Heart right ventricle (tissue), 16 donors: ENCODE measurements at regions of chr3 and their contacts with region 1.

Region 1: DNA sequence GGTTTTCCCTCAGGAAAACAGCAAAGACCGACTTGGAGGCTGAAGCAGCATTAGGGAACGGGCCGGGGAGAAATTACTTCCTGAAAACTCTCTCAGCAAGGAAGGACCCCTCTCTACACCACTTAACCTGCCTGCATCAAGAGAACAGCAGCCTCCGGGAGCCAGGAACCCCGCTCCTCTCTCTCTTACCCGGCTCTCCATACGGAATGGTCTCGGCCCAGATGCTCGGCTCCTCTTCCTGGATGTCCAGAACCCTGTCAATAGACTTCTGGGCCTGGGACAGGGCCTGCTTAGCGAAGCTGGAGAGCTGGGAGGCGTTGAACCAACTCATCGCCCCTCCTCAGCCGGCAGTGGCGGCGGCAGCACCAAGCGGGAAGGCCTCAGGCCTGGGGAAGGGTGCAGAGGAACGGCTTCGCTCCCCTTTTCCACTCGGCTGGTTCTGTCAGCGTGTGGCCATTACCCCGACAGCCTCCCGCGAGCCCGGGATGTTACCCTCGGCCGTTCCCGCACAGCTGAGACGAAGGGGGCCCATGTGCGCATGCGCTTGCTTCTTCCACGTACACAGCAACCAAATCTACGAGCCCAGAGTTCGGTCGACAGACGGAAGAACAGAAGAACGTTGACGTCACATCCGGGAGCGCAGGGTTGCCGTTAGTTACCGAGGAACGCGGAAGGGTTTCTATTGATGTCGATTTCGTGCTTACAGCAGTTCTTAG is at the start of gene TMF1:
- DNase-seq: peak; percentile 98
- ATAC-seq: peak; percentile 96 to 99 (median 98)
- H3K4me3 ChIP-seq: peak within 1 kb of the TSS; percentile 66 to 99 (median 76)
- H3K27ac ChIP-seq: peak within 1 kb of the TSS; percentile 82 to 98 (median 92)
- H3K4me1 ChIP-seq: peaks cover 3 to 42% (median 36%) of the 10 kb centered on the region in 9 donors
- H3K27me3 ChIP-seq: no peaks in the 10 kb centered on the region
- CTCF ChIP-seq: no peak
- total RNA-seq, gene TMF1: 14.8 to 23.2 (median 21.1) TPM

Region 2: DNA sequence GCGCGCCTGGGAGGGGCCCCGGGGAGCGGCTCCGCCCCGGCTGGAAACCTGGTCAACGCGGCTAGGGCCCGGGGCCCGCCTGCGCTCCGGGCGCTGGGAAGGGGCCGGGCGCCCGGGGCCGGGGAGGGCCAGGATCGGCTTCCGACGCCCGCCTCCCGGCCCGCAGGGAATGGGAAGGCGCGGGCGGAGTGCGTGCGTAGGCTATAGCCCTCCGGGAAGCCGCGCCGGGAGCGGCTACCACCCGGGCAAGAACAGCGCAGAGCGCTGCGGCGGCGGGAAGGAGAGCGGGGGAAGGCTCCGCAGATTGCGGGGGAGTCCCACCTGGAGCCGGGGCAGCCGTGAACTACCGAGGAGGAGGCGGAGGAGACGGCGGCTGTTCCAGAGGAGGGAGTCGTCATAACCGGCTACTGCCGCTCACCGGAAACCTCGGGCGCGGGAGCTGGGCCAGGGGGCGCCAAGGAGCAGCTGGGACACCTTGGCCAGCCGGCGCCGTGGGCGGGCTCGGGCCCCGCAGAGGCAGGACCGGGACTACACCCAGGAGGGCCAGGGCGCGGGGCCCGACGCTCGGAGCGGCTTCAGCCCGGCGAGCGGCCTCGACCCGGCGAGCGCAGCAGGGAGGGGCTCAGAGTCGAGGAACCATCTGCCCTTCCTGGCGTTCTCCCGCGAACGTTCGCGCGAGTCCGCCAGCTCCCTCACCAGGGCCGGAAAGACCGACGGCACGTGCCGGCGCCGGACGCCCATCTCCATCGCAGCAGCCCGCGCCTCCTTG is 38.5 kb before region 1 on chr3 and contains the start of gene EOGT:
- intact Hi-C with region 1: loop called in 2 of 10 experiments (anchors 5 kb)
- DNase-seq: peak; percentile 91 to 93
- ATAC-seq: peak; percentile 78 to 96 (median 88)
- H3K4me3 ChIP-seq: peak within 1 kb of the TSS; percentile 65 to 96 (median 83)
- H3K27ac ChIP-seq: peak within 1 kb of the TSS; percentile 92 to 100 (median 99)
- H3K4me1 ChIP-seq: peaks cover 0 to 56% (median 44%) of the 10 kb centered on the region in 9 donors
- H3K27me3 ChIP-seq: no peaks in the 10 kb centered on the region
- CTCF ChIP-seq: peak in 8 of 9 donors; percentile 47 to 86 (median 72)
- total RNA-seq, gene EOGT: 27.1 to 48.3 (median 39.8) TPM

Region 3: DNA sequence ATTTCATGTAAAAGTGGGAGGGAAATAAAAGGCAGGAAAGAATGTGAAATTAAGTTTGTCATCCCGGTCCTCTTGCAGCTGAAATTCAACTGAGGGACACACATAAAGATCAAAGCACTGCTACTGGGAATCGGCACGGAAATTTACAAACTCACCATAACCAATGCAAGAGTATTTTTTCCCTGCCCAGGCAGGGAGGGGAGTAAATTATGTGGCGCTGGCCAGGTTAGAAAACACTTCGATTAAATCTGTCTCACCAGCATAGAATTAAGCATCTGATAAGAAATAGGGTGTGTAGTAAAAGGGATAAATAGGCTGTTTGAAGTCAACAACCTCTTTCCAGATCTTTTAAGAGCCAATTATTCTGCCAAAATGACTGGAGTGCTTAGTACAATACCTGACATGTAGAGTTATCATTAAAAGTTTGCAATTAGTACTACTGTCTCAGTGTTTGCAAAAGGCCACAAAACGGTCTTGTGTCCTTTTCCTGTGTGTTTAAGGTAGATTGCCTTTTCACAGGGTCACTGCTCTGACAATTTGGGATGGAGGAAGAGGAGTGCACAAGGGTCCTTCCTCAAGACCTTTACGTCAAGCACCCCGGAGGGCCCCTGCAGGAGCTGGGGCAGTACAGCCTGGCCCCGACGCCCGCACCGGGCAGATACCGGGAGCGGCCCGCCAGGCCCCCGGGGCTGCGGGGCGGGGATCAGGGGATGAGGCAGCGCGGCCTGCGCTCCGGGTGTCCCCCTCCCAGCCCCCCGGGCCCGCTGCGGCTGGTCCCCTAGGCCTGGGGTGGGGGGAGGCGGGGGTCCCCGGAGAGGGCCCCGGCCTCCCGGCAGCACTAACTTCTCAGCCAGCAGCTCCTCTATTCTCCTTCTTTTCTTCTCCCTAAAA is 27.6 kb after region 1 on chr3:
- intact Hi-C with region 1: loop called in 1 of 10 experiments (anchors 2 kb)
- DNase-seq: peak in 1 of 2 donors; percentile 35
- ATAC-seq: peak; percentile 24 to 79 (median 36)
- H3K4me3 ChIP-seq: peak overlapping the region; percentile 72 to 96 (median 86)
- H3K27ac ChIP-seq: peak overlapping the region; percentile 25 to 96 (median 90)
- H3K4me1 ChIP-seq: peaks cover 7 to 69% (median 58%) of the 10 kb centered on the region in 9 donors
- H3K27me3 ChIP-seq: no peaks in the 10 kb centered on the region
- CTCF ChIP-seq: no peak

Region 4: DNA sequence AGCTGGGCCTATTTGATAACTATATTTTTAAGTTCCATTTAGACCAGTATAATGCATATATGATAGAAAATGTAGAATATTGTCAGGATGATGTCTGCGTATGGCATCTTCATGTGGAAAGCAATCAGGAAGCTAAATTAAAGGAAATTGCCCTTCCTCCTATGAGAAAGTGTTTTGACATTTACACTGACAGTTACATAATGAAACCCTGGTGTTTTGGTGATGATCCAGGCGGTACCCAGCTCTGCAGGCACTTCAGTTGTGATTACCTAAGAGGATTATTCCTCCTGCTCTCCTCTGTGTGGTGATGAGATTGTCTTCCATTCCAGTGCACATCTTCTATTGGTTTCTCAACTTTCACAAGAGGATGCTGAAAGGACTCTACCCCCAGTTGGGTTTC is 560.9 kb after region 1 on chr3:
- intact Hi-C with region 1: no loop called
- DNase-seq: no peak
- ATAC-seq: no peak
- H3K4me3 ChIP-seq: no peak overlapping the region
- H3K27ac ChIP-seq: no peak overlapping the region
- H3K4me1 ChIP-seq: no peaks in the 10 kb centered on the region
- H3K27me3 ChIP-seq: no peaks in the 10 kb centered on the region
- CTCF ChIP-seq: no peak